Heart left ventricle (tissue), 16 donors: ENCODE measurements at regions of chr3 and their contacts with region 1.

Region 1: DNA sequence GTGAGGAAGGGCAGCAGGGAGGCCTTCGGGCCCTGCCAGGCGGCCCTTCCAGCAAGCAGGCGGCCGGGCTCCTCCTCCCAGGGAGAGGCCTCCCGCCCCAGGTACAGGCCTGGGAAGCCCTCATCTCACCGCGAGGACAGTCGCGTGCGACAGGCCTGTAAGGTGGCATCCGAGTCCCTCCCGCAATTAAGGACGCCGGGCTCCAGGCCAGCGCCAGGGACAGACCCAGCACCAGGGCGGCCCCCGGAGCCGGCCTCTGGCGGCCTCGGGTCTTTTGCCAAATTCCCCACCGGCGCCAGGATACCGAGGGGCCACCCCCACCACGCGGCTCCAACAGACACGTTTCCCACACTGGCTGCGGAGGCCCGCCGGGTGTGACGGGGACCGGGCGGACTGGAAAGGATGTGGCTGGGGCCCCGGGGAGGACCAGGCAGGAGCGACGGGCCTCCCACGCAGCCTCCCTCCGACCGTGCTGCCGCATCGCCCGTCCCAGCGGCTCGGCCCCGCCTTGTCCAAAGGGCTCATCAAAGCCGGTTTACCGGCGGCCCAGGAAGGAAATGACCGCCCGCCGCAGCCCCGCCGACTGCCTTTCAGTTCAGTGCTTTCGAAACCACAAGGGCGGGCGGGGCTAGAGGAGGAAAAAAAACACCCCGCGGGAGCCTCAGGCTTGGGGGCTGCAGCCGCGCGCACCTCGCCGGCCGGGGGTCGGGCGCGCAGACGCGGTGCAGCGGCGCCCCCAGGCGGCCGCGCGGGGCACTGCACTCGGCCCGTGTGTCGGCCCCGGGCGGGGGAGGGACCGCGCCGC is 11.3 kb downstream of the XXYLT1 start:
- DNase-seq: peak; percentile 91 to 94 (median 93)
- ATAC-seq: peak; percentile 70 to 90 (median 88)
- H3K4me3 ChIP-seq: peak overlapping the region; percentile 21 to 78 (median 68)
- H3K27ac ChIP-seq: peak overlapping the region; percentile 80 to 97 (median 91)
- H3K4me1 ChIP-seq: peaks cover 0 to 37% (median 22%) of the 10 kb centered on the region in 12 donors
- H3K27me3 ChIP-seq: no peaks in the 10 kb centered on the region
- CTCF ChIP-seq: peak in 11 of 12 donors; percentile 15 to 99 (median 81)
- POLR2A ChIP-seq: peak in 1 of 2 donors; percentile 55

Region 2: GRCh38 chr3:194671900-194672808 is 587.5 kb before region 1 on chr3 and contains the start of gene LSG1:
- intact Hi-C with region 1: loop called in 1 of 10 experiments (anchors 2 kb)
- DNase-seq: peak; percentile 92 to 95 (median 94)
- ATAC-seq: peak; percentile 92 to 97 (median 95)
- H3K4me3 ChIP-seq: peak within 1 kb of the TSS; percentile 67 to 93 (median 82)
- H3K27ac ChIP-seq: peak within 1 kb of the TSS; percentile 90 to 98 (median 94)
- H3K4me1 ChIP-seq: peaks cover 0 to 36% (median 17%) of the 10 kb centered on the region in 12 donors
- H3K27me3 ChIP-seq: no peaks in the 10 kb centered on the region
- CTCF ChIP-seq: peak in 1 of 12 donors; percentile 5
- POLR2A ChIP-seq: peak in 1 of 2 donors; percentile 39
- total RNA-seq, gene LSG1: 13.7 to 22.2 (median 18.9) TPM

Region 3: GRCh38 chr3:194879991-194880939 is 379.4 kb before region 1 on chr3:
- intact Hi-C with region 1: loop called in 1 of 10 experiments (anchors 10 kb)
- DNase-seq: peak; percentile 77 to 86 (median 82)
- ATAC-seq: peak; percentile 44 to 83 (median 72)
- H3K4me3 ChIP-seq: no peak overlapping the region
- H3K27ac ChIP-seq: peak overlapping the region; percentile 54 to 90 (median 81)
- H3K4me1 ChIP-seq: peaks cover 5 to 82% (median 50%) of the 10 kb centered on the region in 12 donors
- H3K27me3 ChIP-seq: no peaks in the 10 kb centered on the region
- CTCF ChIP-seq: no peak
- POLR2A ChIP-seq: no peak

Region 4: GRCh38 chr3:194952841-194953241 is 306.8 kb before region 1 on chr3:
- intact Hi-C with region 1: no loop called
- DNase-seq: peak in 2 of 5 donors; percentile 26 to 52
- ATAC-seq: peak in 3 of 4 donors; percentile 60 to 71 (median 61)
- H3K4me3 ChIP-seq: no peak overlapping the region
- H3K27ac ChIP-seq: peak overlapping the region in 9 of 12 donors; percentile 6 to 72 (median 60)
- H3K4me1 ChIP-seq: peaks cover 0 to 33% (median 17%) of the 10 kb centered on the region in 12 donors
- H3K27me3 ChIP-seq: no peaks in the 10 kb centered on the region
- CTCF ChIP-seq: no peak
- POLR2A ChIP-seq: no peak

Region 5: DNA sequence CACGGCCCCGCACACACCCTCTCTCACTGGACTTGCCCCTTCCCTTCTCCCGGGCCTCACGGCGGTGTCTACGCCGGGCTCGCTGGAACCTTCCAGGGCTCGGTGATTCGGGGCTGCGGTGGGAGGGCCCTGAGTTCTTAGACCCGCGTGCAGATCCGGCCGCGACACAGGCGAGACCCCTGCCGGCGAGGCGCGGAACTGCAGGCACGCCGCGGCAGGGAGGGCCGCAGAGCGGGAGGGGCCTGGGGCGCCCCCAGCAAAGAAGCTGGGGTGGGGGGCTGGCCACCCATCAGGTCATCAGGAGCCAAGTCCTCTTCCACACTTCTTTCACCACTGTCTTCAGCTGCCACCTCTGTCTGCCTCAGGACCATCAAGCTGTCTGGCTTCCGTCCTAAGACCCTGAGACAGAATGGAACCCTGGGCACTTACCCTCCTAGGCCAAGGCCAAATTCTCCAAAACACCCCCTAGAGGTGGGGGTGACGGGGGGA is 153.2 kb before region 1 on chr3:
- intact Hi-C with region 1: loop called in 5 of 10 experiments (anchors 5 to 10 kb)
- DNase-seq: peak; percentile 73 to 88 (median 75)
- ATAC-seq: peak in 3 of 4 donors; percentile 70 to 79 (median 77)
- H3K4me3 ChIP-seq: peak overlapping the region in 6 of 12 donors; percentile 20 to 42 (median 27)
- H3K27ac ChIP-seq: peak overlapping the region in 1 of 12 donors; percentile 30
- H3K4me1 ChIP-seq: peaks cover 2 to 45% (median 18%) of the 10 kb centered on the region in 12 donors
- H3K27me3 ChIP-seq: no peaks in the 10 kb centered on the region
- CTCF ChIP-seq: peak; percentile 99 to 100 (median 100)
- POLR2A ChIP-seq: no peak

Region 6: DNA sequence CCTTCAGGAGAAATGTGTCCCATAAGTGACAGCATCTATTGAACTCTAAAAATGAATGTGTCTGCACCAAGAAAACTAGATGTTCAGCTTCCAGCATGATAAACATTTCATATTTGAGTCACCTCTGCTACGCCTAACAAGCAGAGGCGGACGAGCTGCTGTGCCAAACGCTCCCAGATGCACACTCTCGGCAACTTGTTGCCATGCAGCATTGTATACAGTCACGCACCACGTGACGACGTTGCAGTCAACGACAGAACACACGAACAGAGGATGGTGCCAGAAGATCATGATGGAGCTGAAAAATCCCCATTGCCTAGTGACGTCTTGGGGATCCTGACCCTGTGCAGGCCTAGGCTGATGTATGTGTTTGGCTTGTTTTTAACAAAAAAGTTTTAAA is 126.2 kb before region 1 on chr3:
- intact Hi-C with region 1: loop called in 1 of 10 experiments (anchors 10 kb)
- DNase-seq: no peak
- ATAC-seq: peak in 3 of 4 donors; percentile 56 to 70 (median 67)
- H3K4me3 ChIP-seq: no peak overlapping the region
- H3K27ac ChIP-seq: peak overlapping the region in 1 of 12 donors; percentile 65
- H3K4me1 ChIP-seq: peaks cover 0 to 3% (median 0%) of the 10 kb centered on the region in 12 donors
- H3K27me3 ChIP-seq: no peaks in the 10 kb centered on the region
- CTCF ChIP-seq: no peak
- POLR2A ChIP-seq: no peak

Region 7: DNA sequence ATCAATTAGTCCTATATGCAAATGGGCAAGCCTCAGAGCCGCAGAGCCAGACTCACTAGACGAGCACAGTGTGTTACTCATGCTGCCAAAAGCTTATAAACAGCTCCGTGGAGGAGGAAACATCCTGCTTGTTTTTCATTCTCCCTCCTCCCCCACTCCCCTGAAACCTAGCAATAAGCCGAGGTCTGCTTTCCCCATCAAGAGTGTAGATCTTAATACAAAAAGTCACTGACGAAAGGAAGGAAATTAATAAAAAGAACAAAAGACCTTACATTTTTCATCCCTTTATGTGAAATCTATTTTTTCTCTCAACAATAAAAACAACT is 77.2 kb before region 1 on chr3:
- intact Hi-C with region 1: loop called in 1 of 10 experiments (anchors 10 kb)
- DNase-seq: peak in 1 of 5 donors; percentile 59
- ATAC-seq: peak in 3 of 4 donors; percentile 48 to 67 (median 53)
- H3K4me3 ChIP-seq: no peak overlapping the region
- H3K27ac ChIP-seq: peak overlapping the region in 10 of 12 donors; percentile 24 to 85 (median 53)
- H3K4me1 ChIP-seq: peaks cover 3 to 90% (median 70%) of the 10 kb centered on the region in 12 donors
- H3K27me3 ChIP-seq: no peaks in the 10 kb centered on the region
- CTCF ChIP-seq: no peak
- POLR2A ChIP-seq: no peak

Region 8: DNA sequence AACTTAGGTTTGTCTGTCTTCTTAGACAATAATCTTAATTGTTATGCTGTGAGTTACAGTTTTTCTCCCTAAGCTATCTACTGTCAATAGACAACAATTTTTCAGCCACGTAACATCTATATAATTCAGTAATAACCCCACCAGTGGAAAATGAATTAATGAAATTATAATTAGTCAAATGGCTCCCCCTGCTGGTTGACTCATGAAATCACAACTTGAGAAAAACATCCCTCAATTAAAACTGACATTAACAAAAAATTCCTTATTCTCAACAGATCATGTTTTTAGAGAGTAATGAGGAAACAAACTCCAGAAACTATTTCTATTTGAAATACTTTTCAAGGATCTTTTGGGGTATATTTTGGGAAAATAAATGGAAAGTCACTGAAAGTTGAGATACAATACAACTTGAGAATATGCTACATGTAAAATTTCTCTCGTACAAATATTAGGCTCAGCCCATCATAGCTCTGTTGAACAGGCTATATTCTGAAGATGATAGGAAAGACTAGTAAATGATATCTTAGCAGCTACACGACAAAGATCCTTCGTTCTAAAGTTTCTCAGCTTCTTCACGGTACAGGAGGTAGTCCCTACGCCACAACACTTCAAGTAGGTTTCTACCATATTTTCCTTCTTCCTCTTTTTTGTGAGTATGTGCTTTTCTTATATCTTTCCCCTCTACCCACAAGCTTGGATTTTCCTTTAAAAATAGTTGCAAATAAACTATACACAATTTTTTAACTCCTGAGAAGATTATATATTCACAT is 262.8 kb after region 1 on chr3:
- intact Hi-C with region 1: no loop called
- DNase-seq: no peak
- ATAC-seq: no peak
- H3K4me3 ChIP-seq: no peak overlapping the region
- H3K27ac ChIP-seq: no peak overlapping the region
- H3K4me1 ChIP-seq: peaks cover 0 to 6% (median 0%) of the 10 kb centered on the region in 12 donors
- H3K27me3 ChIP-seq: no peaks in the 10 kb centered on the region
- CTCF ChIP-seq: peak; percentile 69 to 93 (median 78)
- POLR2A ChIP-seq: no peak